ENCODE measurements at regions of chr17 and their contacts with region 1.

Region 1: DNA sequence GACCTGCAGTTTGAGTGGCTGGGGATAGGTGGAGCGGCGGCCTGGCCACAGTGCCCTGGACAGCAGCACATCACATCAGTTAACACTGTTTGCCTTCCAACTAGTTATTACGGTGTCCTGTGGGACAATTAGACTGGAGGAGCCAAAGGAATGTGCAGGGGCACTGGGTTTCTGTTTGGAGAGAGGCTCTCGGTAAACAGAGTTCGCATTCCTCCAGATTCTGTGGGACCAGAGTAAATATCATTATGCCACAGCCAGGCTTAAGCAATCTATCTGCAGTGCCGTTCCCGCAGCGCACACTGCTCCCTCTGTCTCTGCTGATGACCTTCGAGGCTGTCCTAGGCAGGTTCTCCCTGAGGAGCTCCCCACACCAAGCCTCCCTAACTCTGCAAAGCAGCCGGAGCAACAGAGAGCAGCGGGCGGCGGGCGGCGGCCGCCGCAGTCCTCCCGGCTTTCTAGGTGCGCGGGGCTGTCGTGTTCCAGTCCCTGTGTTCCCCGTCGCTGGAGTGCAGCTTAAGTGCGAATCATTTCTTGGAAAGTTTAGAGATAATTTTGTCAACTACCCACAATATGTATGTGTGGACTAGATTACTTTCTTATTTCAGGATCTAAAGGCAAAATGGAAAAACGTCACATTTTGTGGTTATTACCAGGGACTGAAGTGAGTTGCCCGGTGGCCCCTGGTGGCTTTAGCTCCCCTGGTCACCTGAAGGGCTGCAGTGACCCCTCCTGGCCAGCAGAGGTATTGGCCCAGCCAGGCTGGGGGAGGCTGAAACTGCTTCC is 43.2 kb downstream of the PGS1 start:
- DNase-seq: peak; percentile 43
- H3K4me3 ChIP-seq: no peak overlapping the region
- H3K27ac ChIP-seq: no peak overlapping the region
- H3K4me1 ChIP-seq: peaks cover 9% of the 10 kb centered on the region
- H3K27me3 ChIP-seq: no peaks in the 10 kb centered on the region
- CTCF ChIP-seq: peak; percentile 97 to 99

Region 2: GRCh38 chr17:78272181-78272913 is 149.3 kb before region 1 on chr17:
- CTCF ChIA-PET with region 1: no interaction called
- dilution Hi-C with region 1: no loop called
- in situ Hi-C with region 1: no loop called
- intact Hi-C with region 1: loop called (anchors 5 kb)
- DNase-seq: peak; percentile 99
- H3K4me3 ChIP-seq: no peak overlapping the region
- H3K27ac ChIP-seq: no peak overlapping the region
- H3K4me1 ChIP-seq: peaks cover 4% of the 10 kb centered on the region
- H3K27me3 ChIP-seq: peaks cover 6% of the 10 kb centered on the region
- CTCF ChIP-seq: no peak

Region 3: DNA sequence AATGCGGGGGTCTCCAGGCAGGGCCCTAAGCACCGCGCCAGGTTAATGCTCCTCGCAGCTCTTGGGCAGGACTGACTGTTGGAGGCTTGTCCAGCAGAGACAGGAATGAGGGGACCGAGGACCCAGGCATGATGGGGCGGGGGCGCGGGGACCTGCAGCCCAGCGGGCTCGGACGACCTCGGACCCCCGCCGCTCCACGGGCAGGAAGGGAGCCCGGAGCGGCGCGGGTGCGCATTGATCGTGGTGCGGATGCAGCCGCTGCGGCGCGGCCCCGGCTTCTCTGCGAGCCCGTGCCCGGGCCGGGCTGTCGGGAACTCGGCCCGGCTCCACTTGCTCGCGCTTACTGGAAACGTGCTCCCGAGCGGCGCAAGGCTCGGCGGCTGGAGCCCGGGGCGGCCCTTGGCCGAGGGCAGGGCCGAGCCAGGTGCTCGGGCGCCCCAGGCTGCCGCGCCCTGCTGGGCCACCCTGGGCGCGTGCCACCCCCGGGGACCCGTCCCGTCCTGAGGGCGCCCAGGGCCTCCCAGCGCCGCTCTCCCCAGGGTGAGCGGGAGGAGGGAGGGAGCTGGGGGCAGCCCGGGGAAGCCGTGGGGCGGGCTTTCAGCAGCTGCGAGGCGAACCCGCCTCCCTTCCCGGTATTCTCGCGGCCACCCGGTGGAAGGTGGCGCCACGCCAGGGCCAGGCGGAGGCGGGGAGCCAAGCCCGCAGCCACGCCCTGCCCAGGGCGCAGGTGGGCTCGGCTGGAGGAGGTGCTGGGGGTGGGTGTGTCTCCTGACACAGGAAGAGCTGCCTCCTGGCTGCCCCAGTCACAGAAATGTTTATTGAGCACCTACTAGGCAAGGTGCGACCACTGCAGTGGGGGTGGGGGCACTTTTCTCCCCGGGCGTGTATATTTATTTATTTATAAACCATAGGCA is 107.7 kb before region 1 on chr17:
- CTCF ChIA-PET with region 1: no interaction called
- dilution Hi-C with region 1: loop called (anchors 5 kb)
- in situ Hi-C with region 1: no loop called
- intact Hi-C with region 1: no loop called
- DNase-seq: peak; percentile 93
- H3K4me3 ChIP-seq: peak overlapping the region in 2 of 3 experiments; percentile 33 to 46
- H3K27ac ChIP-seq: peak overlapping the region; percentile 79
- H3K4me1 ChIP-seq: peaks cover 46% of the 10 kb centered on the region
- H3K27me3 ChIP-seq: no peaks in the 10 kb centered on the region
- CTCF ChIP-seq: no peak

Region 4: GRCh38 chr17:78378225-78379130 is 43.2 kb before region 1 on chr17 and contains the start of gene PGS1:
- CTCF ChIA-PET with region 1: no interaction called
- dilution Hi-C with region 1: no loop called
- in situ Hi-C with region 1: no loop called
- intact Hi-C with region 1: loop called (anchors 5 kb)
- DNase-seq: peak; percentile 72
- H3K4me3 ChIP-seq: peak within 1 kb of the TSS; percentile 77 to 90 (median 89)
- H3K27ac ChIP-seq: peak within 1 kb of the TSS; percentile 92
- H3K4me1 ChIP-seq: peaks cover 43% of the 10 kb centered on the region
- H3K27me3 ChIP-seq: no peaks in the 10 kb centered on the region
- CTCF ChIP-seq: no peak
- total RNA-seq, gene PGS1: 29.1 to 31.5 TPM

Region 5: DNA sequence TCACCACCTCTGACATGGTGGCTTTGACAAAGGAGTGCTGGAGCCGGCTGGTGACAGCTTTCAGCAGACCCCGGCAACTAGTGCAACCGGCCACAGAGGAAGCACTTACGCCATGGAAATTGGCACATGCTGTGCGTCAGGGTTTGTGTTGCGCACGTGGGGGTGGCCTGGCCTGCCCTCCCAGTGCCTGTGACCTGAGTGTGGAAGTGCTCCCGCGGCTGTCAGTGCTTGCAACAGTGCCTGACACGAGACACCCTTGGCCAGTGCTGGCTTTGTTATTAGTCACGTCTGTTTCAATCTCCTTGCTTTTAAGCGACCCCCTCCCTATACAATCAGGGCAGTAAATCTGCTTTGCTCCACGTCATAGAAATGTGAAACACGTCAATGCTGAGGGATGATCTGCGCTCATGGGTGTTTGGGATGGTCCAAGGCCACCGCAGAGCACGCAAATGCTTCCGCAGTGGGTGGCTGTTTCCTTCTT is 21.0 kb after region 1 on chr17:
- CTCF ChIA-PET with region 1: no interaction called
- dilution Hi-C with region 1: no loop called
- in situ Hi-C with region 1: no loop called
- intact Hi-C with region 1: no loop called
- DNase-seq: no peak
- H3K4me3 ChIP-seq: no peak overlapping the region
- H3K27ac ChIP-seq: no peak overlapping the region
- H3K4me1 ChIP-seq: no peaks in the 10 kb centered on the region
- H3K27me3 ChIP-seq: no peaks in the 10 kb centered on the region
- CTCF ChIP-seq: no peak

Region 6: DNA sequence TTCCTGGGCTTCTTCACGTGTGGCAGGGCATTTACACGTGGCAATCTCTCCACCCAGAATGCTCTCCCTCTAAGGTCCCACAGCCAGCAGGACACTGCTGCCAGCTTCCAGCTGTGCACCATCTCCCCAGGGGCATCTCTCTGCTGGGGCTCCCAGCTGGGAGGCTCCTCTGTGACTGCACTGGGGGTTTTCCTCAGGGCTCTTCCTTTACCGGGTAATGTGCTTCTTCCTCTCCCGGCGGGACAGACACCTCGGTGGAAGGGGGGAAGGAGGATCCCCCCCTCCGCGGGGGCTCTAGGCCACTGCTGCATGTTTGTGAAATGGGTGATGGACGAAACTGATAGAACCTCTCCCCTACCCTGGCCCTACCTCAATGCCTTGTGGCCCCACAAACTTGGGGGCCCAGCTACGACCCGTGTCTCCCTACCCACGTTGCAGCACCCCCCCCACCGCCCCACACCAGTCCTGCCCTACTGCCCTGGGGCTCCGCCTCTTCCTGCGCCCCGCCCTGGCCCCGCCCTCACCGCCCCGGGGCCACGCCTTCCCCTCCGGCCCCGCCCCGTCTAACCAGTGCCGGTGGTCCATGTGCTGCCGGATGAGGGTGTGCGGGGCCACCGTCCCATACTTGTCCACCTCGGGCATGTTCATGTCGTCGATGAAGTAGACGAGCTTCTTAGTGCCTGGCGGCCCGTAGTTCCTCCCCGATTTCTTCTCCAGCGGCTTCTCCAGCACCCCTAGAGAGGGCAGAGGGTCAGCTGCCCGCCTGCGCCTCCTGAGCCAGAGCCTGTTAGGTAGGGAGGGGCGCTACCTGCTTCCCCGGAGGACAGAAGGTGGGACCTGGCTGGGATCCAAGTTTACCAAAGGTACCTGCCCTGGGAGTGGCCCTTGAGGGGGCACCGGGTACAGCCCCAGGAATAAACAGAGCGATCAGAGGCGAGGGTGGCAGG is 62.9 kb after region 1 on chr17:
- CTCF ChIA-PET with region 1: no interaction called
- dilution Hi-C with region 1: loop called (anchors 5 kb)
- in situ Hi-C with region 1: no loop called
- intact Hi-C with region 1: no loop called
- DNase-seq: no peak
- H3K4me3 ChIP-seq: peak overlapping the region in 2 of 3 experiments; percentile 17 to 24
- H3K27ac ChIP-seq: no peak overlapping the region
- H3K4me1 ChIP-seq: peaks cover 4% of the 10 kb centered on the region
- H3K27me3 ChIP-seq: no peaks in the 10 kb centered on the region
- CTCF ChIP-seq: no peak

Measured in mammary epithelial cell (primary cell).